Natural killer cell (primary cell): ENCODE measurements at regions of chr20 and their contacts with region 1.

Region 1: GRCh38 chr20:49979030-49979832 is 3.5 kb upstream of the SNAI1 start:
- DNase-seq: peak; percentile 68 to 84
- ATAC-seq: peak; percentile 56 to 75 (median 62)
- H3K4me3 ChIP-seq: no peak overlapping the region
- H3K4me3 Mint-ChIP-seq: no peak overlapping the region
- H3K27ac ChIP-seq: no peak overlapping the region
- H3K27ac Mint-ChIP-seq: no peak overlapping the region
- H3K4me1 ChIP-seq: peaks cover 30% of the 10 kb centered on the region
- H3K4me1 Mint-ChIP-seq: peaks cover 5 to 37% of the 10 kb centered on the region in 2 donors
- H3K27me3 ChIP-seq: peaks cover 4% of the 10 kb centered on the region
- H3K27me3 Mint-ChIP-seq: peaks cover 0 to 5% of the 10 kb centered on the region in 2 donors
- CTCF ChIP-seq: peak; percentile 100

Region 2: DNA sequence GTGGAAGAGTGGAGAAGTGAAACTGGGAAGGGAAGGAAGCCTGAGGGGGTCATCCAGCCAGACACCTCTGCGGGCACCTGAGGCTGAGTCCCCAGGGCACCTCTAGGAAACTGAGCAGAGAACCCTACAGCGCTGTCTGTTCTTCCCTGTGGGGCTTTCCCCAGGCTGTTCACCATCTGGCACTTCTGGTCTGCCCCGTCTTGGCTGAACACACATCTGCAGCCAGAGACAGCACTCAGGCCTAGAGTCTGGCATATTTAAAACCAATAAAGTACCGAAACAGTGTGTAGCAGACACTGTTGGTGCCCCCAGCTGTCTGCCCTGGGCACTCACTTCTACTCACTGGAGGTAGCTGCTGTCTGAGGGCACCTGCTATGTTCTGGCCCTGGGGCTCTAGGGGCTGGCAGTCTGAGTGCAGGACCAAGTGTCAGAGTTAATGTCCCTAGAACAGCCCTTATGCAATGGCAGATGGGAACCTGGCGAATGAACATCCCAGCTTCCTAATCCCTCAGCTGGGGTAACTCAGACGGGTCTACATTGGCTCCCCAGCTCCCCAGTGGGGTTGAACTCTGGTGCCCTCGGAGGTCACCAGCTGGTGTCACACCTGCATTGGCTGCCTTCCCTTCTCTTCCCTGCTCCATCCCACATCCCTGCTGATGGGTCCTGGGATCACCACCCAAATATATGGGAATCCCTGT is 1067.0 kb before region 1 on chr20:
- intact Hi-C with region 1: no loop called
- DNase-seq: no peak
- ATAC-seq: no peak
- H3K4me3 ChIP-seq: no peak overlapping the region
- H3K4me3 Mint-ChIP-seq: no peak overlapping the region
- H3K27ac ChIP-seq: no peak overlapping the region
- H3K27ac Mint-ChIP-seq: peak overlapping the region; percentile 62 to 93
- H3K4me1 ChIP-seq: peaks cover 31% of the 10 kb centered on the region
- H3K4me1 Mint-ChIP-seq: peaks cover 12 to 34% of the 10 kb centered on the region in 2 donors
- H3K27me3 ChIP-seq: no peaks in the 10 kb centered on the region
- H3K27me3 Mint-ChIP-seq: peaks cover 0 to 4% of the 10 kb centered on the region in 2 donors
- CTCF ChIP-seq: no peak

Region 3: DNA sequence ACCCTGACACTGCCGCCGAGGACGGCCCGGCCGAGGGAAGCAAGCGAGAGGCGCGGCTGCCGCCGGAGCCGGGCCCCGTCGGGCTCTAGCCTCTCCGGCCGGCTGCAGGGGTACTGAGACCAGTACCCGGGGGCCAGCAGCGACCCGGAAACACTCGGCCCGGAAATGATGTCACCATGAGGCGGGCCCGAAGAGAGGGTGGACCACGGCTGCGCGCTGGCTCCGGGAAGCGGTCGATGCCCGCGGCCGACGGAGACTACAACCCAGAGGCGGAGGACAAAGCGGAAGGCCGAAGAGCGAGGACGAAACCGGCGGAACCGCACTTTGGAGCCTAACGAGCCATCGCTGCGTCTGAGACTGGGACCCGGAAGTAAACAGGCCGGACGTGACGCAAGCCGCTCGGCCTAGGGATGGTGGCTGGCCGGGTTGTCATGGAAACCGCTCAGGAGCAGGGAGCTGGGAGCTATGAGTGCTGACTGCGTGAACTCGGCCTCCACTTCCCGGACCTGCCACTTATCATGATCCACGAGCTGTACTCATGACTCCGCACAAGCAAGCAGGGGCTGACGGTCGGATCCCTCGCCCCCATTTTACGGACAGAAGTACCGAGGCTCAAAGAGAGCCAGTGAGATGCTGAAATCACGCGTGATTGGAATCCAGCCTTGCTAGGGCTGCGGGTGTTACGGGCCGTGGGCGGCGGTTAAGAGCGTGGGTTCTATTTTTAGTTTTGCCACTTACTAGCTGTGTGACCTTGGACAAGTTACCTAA is 63.7 kb before region 1 on chr20 and contains the start of gene SPATA2:
- intact Hi-C with region 1: no loop called
- DNase-seq: peak; percentile 95 to 98
- ATAC-seq: peak; percentile 69 to 86 (median 77)
- H3K4me3 ChIP-seq: peak within 1 kb of the TSS; percentile 82
- H3K4me3 Mint-ChIP-seq: peak within 1 kb of the TSS; percentile 98
- H3K27ac ChIP-seq: peak within 1 kb of the TSS; percentile 96
- H3K27ac Mint-ChIP-seq: peak within 1 kb of the TSS; percentile 100
- H3K4me1 ChIP-seq: peaks cover 26% of the 10 kb centered on the region
- H3K4me1 Mint-ChIP-seq: peaks cover 41 to 46% of the 10 kb centered on the region in 2 donors
- H3K27me3 ChIP-seq: no peaks in the 10 kb centered on the region
- H3K27me3 Mint-ChIP-seq: no peaks in the 10 kb centered on the region
- CTCF ChIP-seq: no peak
- total RNA-seq, gene SPATA2: 16.4 to 25.8 (median 25.1) TPM

Region 4: DNA sequence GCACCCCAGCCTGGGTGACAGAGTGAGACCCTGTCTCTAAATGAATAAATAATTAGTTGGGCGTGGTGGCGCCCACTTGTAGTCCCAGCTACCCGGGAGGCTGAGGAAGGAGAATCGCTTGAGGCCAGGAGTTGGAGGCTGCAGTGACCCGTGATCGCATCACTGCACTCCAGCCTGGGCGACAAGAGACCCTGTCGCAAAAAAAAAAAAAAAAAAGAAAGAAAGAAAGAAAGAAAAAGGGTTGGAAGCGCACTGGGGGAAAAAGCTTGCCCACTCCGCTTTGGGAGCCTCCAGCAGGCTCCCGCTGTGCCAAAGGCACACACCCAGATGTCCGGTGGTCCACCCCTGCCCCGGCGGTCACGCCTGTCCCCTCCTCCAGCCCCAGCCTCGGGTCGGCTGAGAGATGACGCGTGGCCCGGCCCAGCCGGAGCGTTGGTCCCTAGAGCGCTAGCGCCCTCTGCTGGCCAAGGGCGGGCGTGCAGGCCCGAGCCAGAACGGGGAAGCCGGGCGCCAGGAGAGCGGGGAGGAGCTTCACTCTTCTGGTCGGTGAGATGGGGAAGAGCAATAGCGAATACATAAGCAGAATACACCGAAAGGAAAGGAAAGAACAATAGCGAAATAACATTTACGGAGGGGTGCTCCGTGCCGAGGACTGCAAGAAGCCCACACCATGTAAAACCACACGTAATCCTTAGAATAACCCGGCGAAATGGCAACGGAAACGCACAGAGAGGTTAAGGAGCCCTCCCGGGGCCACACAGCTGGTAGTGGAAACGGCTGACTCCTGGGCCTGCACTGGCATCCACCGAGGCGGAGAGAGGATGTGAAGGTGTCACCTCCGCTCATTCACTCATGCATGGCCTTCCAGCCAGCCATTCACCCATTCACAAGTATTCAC is 92.0 kb after region 1 on chr20:
- intact Hi-C with region 1: loop called (anchors 1 kb)
- DNase-seq: peak; percentile 91 to 94
- ATAC-seq: peak; percentile 98 to 100 (median 100)
- H3K4me3 ChIP-seq: peak overlapping the region; percentile 4
- H3K4me3 Mint-ChIP-seq: peak overlapping the region; percentile 86
- H3K27ac ChIP-seq: no peak overlapping the region
- H3K27ac Mint-ChIP-seq: peak overlapping the region; percentile 56 to 59
- H3K4me1 ChIP-seq: peaks cover 11% of the 10 kb centered on the region
- H3K4me1 Mint-ChIP-seq: peaks cover 9% of the 10 kb centered on the region in 2 donors
- H3K27me3 ChIP-seq: no peaks in the 10 kb centered on the region
- H3K27me3 Mint-ChIP-seq: peaks cover 0 to 3% of the 10 kb centered on the region in 2 donors
- CTCF ChIP-seq: peak; percentile 98

Region 5: GRCh38 chr20:50085452-50086365 is 106.5 kb after region 1 on chr20:
- intact Hi-C with region 1: loop called (anchors 1 kb)
- DNase-seq: peak; percentile 19 to 78
- ATAC-seq: peak; percentile 81 to 88 (median 87)
- H3K4me3 ChIP-seq: peak overlapping the region; percentile 19
- H3K4me3 Mint-ChIP-seq: peak overlapping the region; percentile 75
- H3K27ac ChIP-seq: no peak overlapping the region
- H3K27ac Mint-ChIP-seq: peak overlapping the region; percentile 63 to 80
- H3K4me1 ChIP-seq: peaks cover 12% of the 10 kb centered on the region
- H3K4me1 Mint-ChIP-seq: peaks cover 41 to 52% of the 10 kb centered on the region in 2 donors
- H3K27me3 ChIP-seq: no peaks in the 10 kb centered on the region
- H3K27me3 Mint-ChIP-seq: no peaks in the 10 kb centered on the region
- CTCF ChIP-seq: peak; percentile 79

Region 6: GRCh38 chr20:50169329-50169831 is 190.1 kb after region 1 on chr20:
- intact Hi-C with region 1: loop called (anchors 2 kb)
- DNase-seq: peak; percentile 83 to 90
- ATAC-seq: peak; percentile 71 to 88 (median 84)
- H3K4me3 ChIP-seq: no peak overlapping the region
- H3K4me3 Mint-ChIP-seq: no peak overlapping the region
- H3K27ac ChIP-seq: no peak overlapping the region
- H3K27ac Mint-ChIP-seq: peak overlapping the region in 1 of 2 donors; percentile 35
- H3K4me1 ChIP-seq: peaks cover 18% of the 10 kb centered on the region
- H3K4me1 Mint-ChIP-seq: peaks cover 9 to 17% of the 10 kb centered on the region in 2 donors
- H3K27me3 ChIP-seq: peaks cover 2% of the 10 kb centered on the region
- H3K27me3 Mint-ChIP-seq: peaks cover 13 to 14% of the 10 kb centered on the region in 2 donors
- CTCF ChIP-seq: peak; percentile 96